ENCODE measurements at regions of chr10 and their contacts with region 1.

Region 1: DNA sequence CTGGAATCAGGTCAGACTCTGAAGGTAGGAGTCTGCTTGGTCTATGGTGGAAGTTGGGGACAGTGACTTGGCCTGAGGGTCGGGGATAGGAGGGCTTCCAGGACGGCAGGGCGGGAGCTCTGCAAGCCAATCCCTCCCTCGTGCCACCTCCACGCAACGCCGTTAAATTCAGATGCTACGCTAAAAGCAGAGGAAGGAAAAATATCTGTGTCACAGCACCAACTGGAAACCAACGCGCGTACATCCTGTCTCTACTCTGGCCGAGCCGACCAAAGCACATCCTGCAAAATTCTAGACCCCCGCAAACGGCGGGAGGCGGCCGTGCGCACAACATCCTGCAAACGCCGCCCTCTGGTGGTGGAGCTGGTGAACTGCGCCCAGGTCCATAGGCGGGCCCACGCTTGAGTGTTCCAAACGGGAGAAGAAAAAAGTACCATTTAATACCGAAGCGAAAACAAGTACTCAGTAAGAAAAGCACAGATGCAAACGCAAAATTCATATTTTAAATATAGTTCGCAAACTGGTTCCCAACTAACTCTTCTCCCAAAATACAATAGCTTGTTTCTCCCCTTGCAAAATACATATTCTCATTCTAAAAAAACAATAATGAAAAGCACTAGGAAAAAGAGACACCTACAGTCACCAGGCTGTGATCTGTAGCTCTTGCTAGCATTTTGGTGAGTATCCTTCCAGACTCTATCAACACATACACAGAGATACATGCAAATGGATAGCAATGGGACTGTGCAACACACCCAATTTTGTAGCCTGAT is 45.7 kb upstream of the HSPA12A start:
- DNase-seq: peak; percentile 62
- H3K4me3 ChIP-seq: no peak overlapping the region
- H3K27ac ChIP-seq: no peak overlapping the region
- H3K4me1 ChIP-seq: no peaks in the 10 kb centered on the region
- H3K27me3 ChIP-seq: no peaks in the 10 kb centered on the region
- CTCF ChIP-seq: peak; percentile 94 to 97
- POLR2A ChIP-seq: no peak

Region 2: GRCh38 chr10:116683821-116684220 is 104.3 kb before region 1 on chr10:
- CTCF ChIA-PET with region 1: interaction called, 120 read pairs
- POLR2A ChIA-PET with region 1: no interaction called
- dilution Hi-C with region 1: no loop called
- intact Hi-C with region 1: loop called (anchors 1 kb)
- DNase-seq: no peak
- H3K4me3 ChIP-seq: no peak overlapping the region
- H3K27ac ChIP-seq: no peak overlapping the region
- H3K4me1 ChIP-seq: no peaks in the 10 kb centered on the region
- H3K27me3 ChIP-seq: no peaks in the 10 kb centered on the region
- CTCF ChIP-seq: no peak
- POLR2A ChIP-seq: no peak

Region 3: GRCh38 chr10:116696919-116697318 is 91.2 kb before region 1 on chr10:
- CTCF ChIA-PET with region 1: interaction called, 24 read pairs
- POLR2A ChIA-PET with region 1: no interaction called
- dilution Hi-C with region 1: no loop called
- intact Hi-C with region 1: no loop called
- DNase-seq: no peak
- H3K4me3 ChIP-seq: no peak overlapping the region
- H3K27ac ChIP-seq: no peak overlapping the region
- H3K4me1 ChIP-seq: no peaks in the 10 kb centered on the region
- H3K27me3 ChIP-seq: no peaks in the 10 kb centered on the region
- CTCF ChIP-seq: no peak
- POLR2A ChIP-seq: no peak

Region 4: GRCh38 chr10:116765547-116766162 is 22.4 kb before region 1 on chr10:
- CTCF ChIA-PET with region 1: interaction called, 13 read pairs
- POLR2A ChIA-PET with region 1: no interaction called
- dilution Hi-C with region 1: no loop called
- intact Hi-C with region 1: no loop called
- DNase-seq: peak; percentile 8
- H3K4me3 ChIP-seq: no peak overlapping the region
- H3K27ac ChIP-seq: no peak overlapping the region
- H3K4me1 ChIP-seq: no peaks in the 10 kb centered on the region
- H3K27me3 ChIP-seq: no peaks in the 10 kb centered on the region
- CTCF ChIP-seq: peak; percentile 19 to 40
- POLR2A ChIP-seq: no peak

Region 5: DNA sequence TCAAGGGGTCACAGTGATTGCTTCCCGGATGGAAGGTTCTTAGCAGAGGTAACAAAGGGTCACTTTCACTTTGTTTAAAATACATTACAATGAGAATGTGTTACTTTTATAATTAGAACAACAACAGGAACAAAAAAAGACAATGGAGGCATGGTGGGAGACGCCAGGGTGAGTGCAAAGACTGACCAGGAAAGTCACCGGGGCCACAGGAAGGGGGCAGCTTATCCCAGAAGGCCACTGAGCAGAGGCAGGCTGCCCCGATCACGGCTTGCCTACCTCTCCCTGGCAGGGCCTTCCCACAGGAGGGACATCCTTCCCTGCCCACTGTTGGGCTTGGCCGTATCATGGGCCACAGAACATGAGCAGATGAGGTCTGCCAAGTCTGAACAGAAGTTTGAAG is 14.4 kb after region 1 on chr10:
- CTCF ChIA-PET with region 1: interaction called, 53 read pairs
- POLR2A ChIA-PET with region 1: no interaction called
- dilution Hi-C with region 1: no loop called
- intact Hi-C with region 1: no loop called
- DNase-seq: no peak
- H3K4me3 ChIP-seq: no peak overlapping the region
- H3K27ac ChIP-seq: no peak overlapping the region
- H3K4me1 ChIP-seq: no peaks in the 10 kb centered on the region
- H3K27me3 ChIP-seq: no peaks in the 10 kb centered on the region
- CTCF ChIP-seq: no peak
- POLR2A ChIP-seq: no peak

Measured in endothelial cell of umbilical vein (primary cell).